ENCODE measurements at regions of chr7 and their contacts with region 1.

Region 1: DNA sequence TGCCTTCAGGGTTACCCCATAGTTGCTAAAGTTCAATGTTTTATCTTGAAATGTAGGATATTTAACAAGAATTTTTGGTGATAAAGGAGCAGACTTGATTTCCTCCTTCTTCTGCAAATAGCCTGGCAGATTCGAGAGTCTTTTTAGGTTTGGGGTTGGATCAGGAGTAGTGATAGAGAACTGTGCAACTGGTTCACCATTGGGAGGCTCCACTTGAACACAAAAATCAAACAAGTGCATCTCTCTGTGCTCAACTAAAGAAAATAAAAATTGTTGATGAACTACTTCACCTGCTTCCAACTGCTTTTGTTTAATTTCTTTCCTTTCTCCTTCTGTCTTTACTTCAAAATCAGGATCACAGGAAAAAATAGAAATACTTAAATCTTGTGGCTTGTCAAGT is 58.5 kb downstream of the MACC1 start:
- DNase-seq: no peak

Region 2: GRCh38 chr7:20193227-20193777 is 34.6 kb after region 1 on chr7:
- intact Hi-C with region 1: no loop called
- DNase-seq: no peak

Region 3: DNA sequence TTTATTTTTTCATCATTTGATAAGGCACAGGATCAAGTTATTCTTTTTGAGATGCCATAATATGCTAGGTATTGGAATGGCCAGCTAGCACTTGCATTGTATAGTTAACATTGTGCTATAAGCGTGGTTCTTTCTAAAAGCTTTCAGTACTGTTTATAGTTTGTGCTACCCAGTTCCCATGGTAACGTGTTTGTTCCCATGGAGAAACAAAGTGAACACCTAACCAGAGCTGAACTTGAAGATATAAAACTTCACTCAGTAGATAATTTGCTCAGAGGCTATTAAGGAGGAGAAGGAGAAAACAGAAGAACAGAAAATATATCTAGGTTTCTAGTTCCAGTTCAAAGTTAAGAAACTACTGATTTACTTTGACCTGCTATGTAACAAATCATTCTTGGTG is 148.4 kb after region 1 on chr7:
- intact Hi-C with region 1: loop called (anchors 5 kb)
- DNase-seq: no peak

Region 4: GRCh38 chr7:20458521-20458920 is 299.8 kb after region 1 on chr7:
- intact Hi-C with region 1: no loop called
- DNase-seq: no peak

Region 5: GRCh38 chr7:20491284-20491683 is 332.6 kb after region 1 on chr7:
- intact Hi-C with region 1: no loop called
- DNase-seq: no peak

Region 6: DNA sequence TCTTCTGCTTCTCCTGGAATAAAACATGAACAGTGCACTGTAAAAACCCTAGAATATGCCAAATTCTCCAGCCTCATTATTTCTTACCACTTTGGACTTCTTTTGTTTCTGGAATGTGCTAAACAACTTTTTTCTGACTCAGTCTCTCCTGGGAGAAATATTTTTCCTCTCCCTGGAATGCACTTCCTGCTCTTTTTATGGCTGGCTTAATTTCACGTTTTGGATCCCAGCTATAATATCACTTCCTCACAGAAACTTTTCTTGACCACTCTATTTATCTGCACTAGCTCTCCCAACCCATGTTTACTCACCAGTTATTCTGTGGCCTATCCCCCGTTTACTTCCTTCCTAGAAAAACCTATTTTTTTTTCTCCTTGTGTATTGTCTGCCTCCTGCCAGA is 483.5 kb after region 1 on chr7:
- intact Hi-C with region 1: no loop called
- DNase-seq: no peak